Psoas muscle (tissue), 8 donors: ENCODE measurements at regions of chr1 and their contacts with region 1.

Region 1: DNA sequence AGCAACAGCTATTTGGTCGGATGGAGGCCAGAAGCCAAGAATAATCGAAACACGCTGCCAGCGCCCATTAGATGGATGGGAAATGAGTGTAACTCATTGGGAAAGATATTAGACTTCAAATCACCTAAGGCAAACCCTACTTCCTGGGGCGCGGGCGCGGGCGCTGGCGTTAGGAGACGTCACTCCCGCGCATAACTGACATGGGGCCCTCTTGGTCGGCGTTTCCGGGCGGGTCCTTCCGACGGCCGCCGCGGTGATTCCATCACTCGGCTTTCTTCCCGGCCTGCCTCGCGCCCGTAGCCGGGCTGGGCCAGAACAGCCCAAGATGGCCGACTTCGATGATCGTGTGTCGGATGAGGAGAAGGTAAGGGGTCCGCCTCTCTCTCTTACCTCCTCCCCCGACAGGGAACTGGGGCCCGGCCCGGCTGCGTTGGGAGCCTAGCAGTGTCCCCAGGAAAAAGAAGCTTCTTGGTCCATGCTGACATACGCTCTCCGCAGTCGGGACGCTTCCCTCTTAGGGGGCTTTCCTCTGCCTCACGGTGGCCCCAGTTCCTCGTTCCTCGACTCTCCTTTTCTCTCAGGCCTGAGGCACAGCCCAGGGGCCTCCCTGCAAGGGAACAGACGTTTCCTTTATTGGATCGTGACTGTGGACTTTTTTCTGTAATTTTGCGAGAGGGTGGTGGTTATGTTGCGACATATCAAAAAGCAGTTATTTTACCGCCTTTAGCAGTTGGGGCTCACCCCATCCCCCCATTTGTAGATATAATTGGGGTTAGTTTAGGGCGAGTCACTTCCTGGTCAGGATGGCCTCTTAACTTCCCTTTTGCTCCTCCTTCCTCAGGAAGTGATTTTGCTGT is at the start of gene CAPZA1:
- DNase-seq: peak; percentile 92 to 96
- ATAC-seq: peak; percentile 95 to 96 (median 95)
- H3K4me3 ChIP-seq: peak within 1 kb of the TSS; percentile 88
- H3K27ac ChIP-seq: peak within 1 kb of the TSS; percentile 96
- H3K4me1 ChIP-seq: peaks cover 50% of the 10 kb centered on the region
- H3K27me3 ChIP-seq: no peaks in the 10 kb centered on the region
- CTCF ChIP-seq: no peak
- total RNA-seq, gene CAPZA1: 24.2 to 39.1 (median 33.1) TPM

Region 2: DNA sequence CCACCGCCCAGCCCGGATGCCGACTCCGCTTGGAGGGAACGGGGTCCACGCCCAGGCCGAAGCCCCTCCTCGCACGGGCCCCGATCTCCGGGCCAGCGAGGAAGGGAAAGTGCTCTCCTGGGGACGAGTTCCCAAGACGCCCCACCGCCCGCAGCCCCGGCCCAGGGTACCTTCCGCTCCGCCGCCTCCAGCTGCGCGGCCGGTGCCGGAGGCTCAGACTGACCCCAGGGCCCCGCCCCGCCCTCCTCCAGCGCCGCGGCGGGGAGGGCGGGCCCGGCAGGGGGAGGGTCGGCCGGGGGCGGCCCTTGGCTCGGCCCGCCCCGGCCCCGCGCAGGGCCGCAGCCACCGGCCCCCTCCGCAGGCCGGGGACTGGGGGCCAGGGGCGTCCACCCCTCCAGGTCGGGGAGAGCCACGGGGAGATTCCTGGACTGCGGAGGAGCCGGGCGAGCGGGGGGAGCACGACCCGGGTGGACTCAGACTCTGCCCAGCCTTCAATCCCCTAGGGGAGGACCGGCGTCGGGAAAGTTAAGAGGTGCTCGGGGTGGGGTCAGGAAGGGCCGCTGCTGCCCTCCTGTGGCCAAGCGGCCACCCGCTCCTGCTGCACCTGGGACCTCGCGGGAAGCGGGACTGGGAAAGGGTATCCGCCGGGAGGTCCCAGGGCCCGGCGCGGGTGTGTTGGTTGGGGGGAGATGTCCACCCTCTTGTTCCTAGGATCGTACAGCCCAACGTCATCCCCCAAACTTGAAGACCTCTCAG is 87.3 kb after region 1 on chr1 and contains the start of gene RHOC:
- intact Hi-C with region 1: loop called (anchors 2 to 5 kb)
- DNase-seq: peak; percentile 89 to 93
- ATAC-seq: peak; percentile 84 to 91 (median 90)
- H3K4me3 ChIP-seq: peak within 1 kb of the TSS; percentile 83
- H3K27ac ChIP-seq: peak within 1 kb of the TSS; percentile 83
- H3K4me1 ChIP-seq: peaks cover 22% of the 10 kb centered on the region
- H3K27me3 ChIP-seq: no peaks in the 10 kb centered on the region
- CTCF ChIP-seq: peak; percentile 90
- total RNA-seq, gene RHOC: 43.5 to 88.3 (median 75.5) TPM

Region 3: GRCh38 chr1:112803906-112804762 is 184.4 kb after region 1 on chr1:
- intact Hi-C with region 1: loop called in 1 of 2 experiments (anchors 10 kb)
- DNase-seq: peak; percentile 56 to 84
- ATAC-seq: peak; percentile 78 to 85 (median 83)
- H3K4me3 ChIP-seq: no peak overlapping the region
- H3K27ac ChIP-seq: no peak overlapping the region
- H3K4me1 ChIP-seq: peaks cover 8% of the 10 kb centered on the region
- H3K27me3 ChIP-seq: no peaks in the 10 kb centered on the region
- CTCF ChIP-seq: peak; percentile 75

Region 4: GRCh38 chr1:113072757-113073478 is 453.2 kb after region 1 on chr1 and contains the start of gene LRIG2:
- intact Hi-C with region 1: loop called in 1 of 2 experiments (anchors 10 kb)
- DNase-seq: peak; percentile 99
- ATAC-seq: peak; percentile 99 to 100 (median 100)
- H3K4me3 ChIP-seq: peak within 1 kb of the TSS; percentile 98
- H3K27ac ChIP-seq: peak within 1 kb of the TSS; percentile 92
- H3K4me1 ChIP-seq: peaks cover 24% of the 10 kb centered on the region
- H3K27me3 ChIP-seq: no peaks in the 10 kb centered on the region
- CTCF ChIP-seq: peak; percentile 80
- total RNA-seq, gene LRIG2: 3.4 to 6.0 (median 5.0) TPM